ENCODE measurements at regions of chr3 and their contacts with region 1.

Region 1: GRCh38 chr3:7095116-7095515 is 234.2 kb downstream of the GRM7 start:
- DNase-seq: no peak
- H3K4me3 ChIP-seq: no peak overlapping the region
- H3K27ac ChIP-seq: no peak overlapping the region
- H3K4me1 ChIP-seq: no peaks in the 10 kb centered on the region
- CTCF ChIP-seq: no peak

Region 2: GRCh38 chr3:5357089-5357488 is 1738.0 kb before region 1 on chr3:
- CTCF ChIA-PET with region 1: no interaction called
- POLR2A ChIA-PET with region 1: no interaction called
- intact Hi-C with region 1: no loop called
- DNase-seq: no peak
- H3K4me3 ChIP-seq: no peak overlapping the region
- H3K27ac ChIP-seq: no peak overlapping the region
- H3K4me1 ChIP-seq: no peaks in the 10 kb centered on the region
- CTCF ChIP-seq: no peak

Region 3: DNA sequence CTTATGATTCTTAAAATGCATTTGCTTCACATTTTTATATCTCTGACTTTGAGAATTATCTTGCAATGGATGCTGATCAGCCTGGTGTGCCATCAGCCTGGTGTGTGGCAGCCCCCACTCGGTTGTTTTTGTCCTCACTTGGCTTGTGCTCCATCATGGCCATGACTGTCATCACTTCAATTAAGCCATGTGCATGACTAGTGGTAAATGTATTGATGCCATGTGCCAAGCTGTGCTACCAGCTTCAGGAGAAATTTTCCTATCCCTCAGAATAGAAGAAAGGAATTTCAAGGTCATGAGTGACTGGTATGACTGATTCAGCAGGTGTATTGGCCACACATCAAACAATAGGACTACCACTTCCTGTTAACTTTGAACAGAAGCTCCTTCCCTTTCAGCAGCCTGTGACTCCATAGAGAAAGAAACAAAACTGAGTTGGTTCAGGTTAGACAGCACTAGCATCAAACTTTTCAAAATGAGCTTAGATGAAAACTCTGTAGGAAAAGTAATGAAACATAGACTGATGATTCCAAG is 17.5 kb after region 1 on chr3:
- CTCF ChIA-PET with region 1: no interaction called
- POLR2A ChIA-PET with region 1: no interaction called
- intact Hi-C with region 1: loop called (anchors 1 kb)
- DNase-seq: no peak
- H3K4me3 ChIP-seq: no peak overlapping the region
- H3K27ac ChIP-seq: no peak overlapping the region
- H3K4me1 ChIP-seq: no peaks in the 10 kb centered on the region
- CTCF ChIP-seq: no peak

Measured in OCI-LY7 (cell line).